ENCODE measurements at regions of chr10 and their contacts with region 1.

Region 1: GRCh38 chr10:93816123-93816747 is 58.5 kb downstream of the LGI1 start:
- DNase-seq: peak; percentile 13
- H3K4me3 ChIP-seq: no peak overlapping the region
- H3K27ac ChIP-seq: no peak overlapping the region
- H3K4me1 ChIP-seq: no peaks in the 10 kb centered on the region
- CTCF ChIP-seq: peak; percentile 75

Region 2: GRCh38 chr10:93554760-93555432 is 261.3 kb before region 1 on chr10:
- CTCF ChIA-PET with region 1: no interaction called
- POLR2A ChIA-PET with region 1: no interaction called
- intact Hi-C with region 1: loop called (anchors 10 kb)
- DNase-seq: peak; percentile 77
- H3K4me3 ChIP-seq: no peak overlapping the region
- H3K27ac ChIP-seq: no peak overlapping the region
- H3K4me1 ChIP-seq: peaks cover 15% of the 10 kb centered on the region
- CTCF ChIP-seq: peak; percentile 87

Region 3: DNA sequence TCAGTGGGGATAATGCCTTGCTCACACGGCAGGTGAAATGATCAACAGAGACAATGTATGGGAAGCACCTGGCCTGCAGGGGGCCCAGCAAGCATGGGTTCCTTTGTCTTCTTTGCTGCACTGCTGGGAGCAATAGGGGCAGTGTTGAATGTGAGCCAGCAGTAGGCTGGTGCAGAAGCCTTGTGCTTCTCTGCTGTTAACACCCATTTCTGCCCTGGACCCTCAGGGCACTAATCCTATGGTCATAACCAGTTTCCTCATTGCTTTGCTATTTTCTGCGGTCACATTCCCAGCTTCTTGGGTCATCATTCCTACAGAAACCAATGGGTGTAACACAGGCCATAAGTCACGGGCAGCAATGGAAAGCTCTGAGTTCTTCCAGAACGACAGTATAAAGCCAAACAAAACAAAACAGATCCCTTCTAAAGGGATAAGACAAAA is 69.4 kb before region 1 on chr10:
- CTCF ChIA-PET with region 1: no interaction called
- POLR2A ChIA-PET with region 1: no interaction called
- intact Hi-C with region 1: loop called (anchors 5 kb)
- DNase-seq: peak; percentile 45
- H3K4me3 ChIP-seq: no peak overlapping the region
- H3K27ac ChIP-seq: no peak overlapping the region
- H3K4me1 ChIP-seq: peaks cover 12% of the 10 kb centered on the region
- CTCF ChIP-seq: peak; percentile 74

Region 4: GRCh38 chr10:93838278-93838677 is 22.0 kb after region 1 on chr10:
- CTCF ChIA-PET with region 1: no interaction called
- POLR2A ChIA-PET with region 1: no interaction called
- intact Hi-C with region 1: no loop called
- DNase-seq: no peak
- H3K4me3 ChIP-seq: no peak overlapping the region
- H3K27ac ChIP-seq: no peak overlapping the region
- H3K4me1 ChIP-seq: no peaks in the 10 kb centered on the region
- CTCF ChIP-seq: no peak

Region 5: GRCh38 chr10:93874309-93875031 is 58.2 kb after region 1 on chr10:
- CTCF ChIA-PET with region 1: no interaction called
- POLR2A ChIA-PET with region 1: no interaction called
- intact Hi-C with region 1: no loop called
- DNase-seq: no peak
- H3K4me3 ChIP-seq: no peak overlapping the region
- H3K27ac ChIP-seq: no peak overlapping the region
- H3K4me1 ChIP-seq: no peaks in the 10 kb centered on the region
- CTCF ChIP-seq: no peak

Region 6: DNA sequence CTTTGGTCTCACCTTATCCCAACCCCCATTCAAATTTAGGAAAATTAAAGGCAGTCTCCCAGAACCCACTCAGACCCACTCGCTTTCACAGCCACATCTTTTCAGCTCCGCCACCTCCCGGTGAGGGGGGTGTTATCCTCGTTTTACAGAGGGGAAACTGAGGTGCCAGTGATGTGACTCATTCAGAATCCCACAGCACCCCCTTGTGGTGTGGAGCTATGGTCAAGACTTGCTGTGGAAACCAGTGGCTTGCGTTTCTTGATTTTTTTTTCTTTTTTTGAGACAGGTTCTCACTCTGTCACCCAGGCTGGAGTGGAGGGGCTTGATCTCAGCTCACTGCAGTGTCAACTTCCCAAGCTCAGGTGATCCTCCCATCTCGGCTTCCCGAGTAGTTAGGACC is 105.1 kb after region 1 on chr10:
- CTCF ChIA-PET with region 1: no interaction called
- POLR2A ChIA-PET with region 1: no interaction called
- intact Hi-C with region 1: loop called (anchors 1 kb)
- DNase-seq: peak; percentile 47
- H3K4me3 ChIP-seq: no peak overlapping the region
- H3K27ac ChIP-seq: no peak overlapping the region
- H3K4me1 ChIP-seq: no peaks in the 10 kb centered on the region
- CTCF ChIP-seq: peak; percentile 85

Region 7: DNA sequence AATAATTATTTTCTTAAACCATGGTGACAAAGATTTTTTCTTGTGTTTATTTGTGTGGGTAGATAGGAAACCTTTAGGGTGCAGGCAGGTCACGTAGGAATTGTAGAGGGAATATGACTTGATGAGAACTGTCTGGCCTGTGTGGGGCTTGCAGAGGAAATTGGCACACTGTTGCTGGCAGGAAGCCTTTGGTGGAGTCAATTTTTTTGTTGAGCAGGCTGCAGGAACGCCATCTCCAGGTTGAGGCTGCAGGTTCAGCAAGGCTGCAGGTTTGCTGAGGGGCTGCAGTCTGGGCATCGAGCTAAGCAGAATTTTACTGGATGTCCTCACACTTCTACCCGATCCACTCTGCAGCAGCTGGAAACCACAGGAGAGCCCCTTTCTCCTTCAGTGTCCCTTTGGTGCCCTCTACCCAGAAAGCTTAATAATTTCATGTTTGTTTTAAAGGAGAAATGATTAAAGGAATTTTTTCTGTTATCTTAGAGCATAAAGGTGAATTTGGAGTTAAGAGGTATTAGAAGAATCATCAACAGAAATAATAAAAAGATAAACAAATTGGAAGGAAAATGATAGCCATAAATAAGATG is 623.1 kb after region 1 on chr10:
- CTCF ChIA-PET with region 1: no interaction called
- POLR2A ChIA-PET with region 1: no interaction called
- intact Hi-C with region 1: loop called (anchors 5 kb)
- DNase-seq: no peak
- H3K4me3 ChIP-seq: no peak overlapping the region
- H3K27ac ChIP-seq: no peak overlapping the region
- H3K4me1 ChIP-seq: no peaks in the 10 kb centered on the region
- CTCF ChIP-seq: no peak